Activated CD4-positive, alpha-beta memory T cell treated with anti-CD3 and anti-CD28 coated beads, Interleukin-2, amount 10 ng/mL, durations not matched to agents 7 days and 5 days (primary cell): ENCODE measurements at regions of chr17 and their contacts with region 1.

Region 1: GRCh38 chr17:31524926-31525800 is 133.7 kb downstream of the RAB11FIP4 start:
- DNase-seq: peak; percentile 85
- H3K4me3 Mint-ChIP-seq: no peak overlapping the region
- H3K27ac Mint-ChIP-seq: no peak overlapping the region
- H3K4me1 Mint-ChIP-seq: no peaks in the 10 kb centered on the region
- H3K27me3 Mint-ChIP-seq: no peaks in the 10 kb centered on the region

Region 2: DNA sequence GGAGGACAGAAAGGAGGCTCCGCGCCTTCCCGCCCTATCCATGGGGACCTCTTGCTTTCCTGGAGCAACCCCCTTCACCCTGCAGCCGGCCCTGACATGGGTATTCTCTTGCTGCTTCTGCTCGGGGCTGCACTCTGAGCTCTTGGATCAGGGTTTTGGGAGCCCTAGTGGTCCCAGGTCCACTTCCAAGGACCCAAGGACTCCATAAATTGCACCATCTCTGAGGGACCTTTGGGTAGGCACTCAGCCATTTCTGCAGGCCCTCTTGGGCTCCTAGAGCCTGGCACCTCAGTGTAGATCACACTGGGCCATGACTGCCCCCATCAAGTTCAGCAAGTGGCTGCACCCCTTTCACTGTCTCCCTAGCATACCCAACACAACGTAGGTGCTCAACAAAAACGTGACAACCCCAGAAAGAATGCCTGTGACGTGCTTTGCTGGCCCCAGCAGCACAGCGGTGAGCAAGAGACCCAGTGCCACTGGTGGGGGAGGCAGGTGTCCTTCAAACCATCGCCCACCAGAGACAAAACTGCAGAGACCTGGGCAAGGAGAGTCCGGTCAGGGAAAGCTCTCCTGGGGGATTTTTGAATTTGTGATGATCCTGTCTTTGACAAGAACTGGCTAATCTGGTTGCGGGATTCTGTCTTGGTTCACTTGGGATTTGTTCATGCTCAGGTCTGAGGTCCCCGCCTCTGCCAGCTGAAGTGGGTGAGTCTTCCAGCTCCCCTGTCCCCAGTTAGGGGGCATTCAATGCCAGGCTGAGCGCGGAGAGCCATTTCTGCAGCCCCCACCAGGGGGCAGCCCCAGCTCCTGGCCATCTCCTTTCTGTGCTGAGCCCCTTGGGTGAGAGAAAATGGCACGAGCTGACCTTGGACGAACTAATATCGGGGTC is 136.1 kb before region 1 on chr17:
- CTCF ChIA-PET with region 1: interaction called, 25 read pairs
- POLR2A ChIA-PET with region 1: interaction called, 4 read pairs
- DNase-seq: peak; percentile 46
- H3K4me3 Mint-ChIP-seq: no peak overlapping the region
- H3K27ac Mint-ChIP-seq: no peak overlapping the region
- H3K4me1 Mint-ChIP-seq: peaks cover 13% of the 10 kb centered on the region
- H3K27me3 Mint-ChIP-seq: peaks cover 41% of the 10 kb centered on the region

Region 3: GRCh38 chr17:31437720-31438420 is 87.3 kb before region 1 on chr17:
- CTCF ChIA-PET with region 1: interaction called, 26 read pairs
- POLR2A ChIA-PET with region 1: no interaction called
- DNase-seq: no peak
- H3K4me3 Mint-ChIP-seq: no peak overlapping the region
- H3K27ac Mint-ChIP-seq: no peak overlapping the region
- H3K4me1 Mint-ChIP-seq: peaks cover 17% of the 10 kb centered on the region
- H3K27me3 Mint-ChIP-seq: peaks cover 20% of the 10 kb centered on the region

Region 4: GRCh38 chr17:31549525-31550388 is 24.6 kb after region 1 on chr17:
- CTCF ChIA-PET with region 1: no interaction called
- POLR2A ChIA-PET with region 1: no interaction called
- DNase-seq: peak; percentile 93
- H3K4me3 Mint-ChIP-seq: peak overlapping the region; percentile 70
- H3K27ac Mint-ChIP-seq: peak overlapping the region; percentile 77
- H3K4me1 Mint-ChIP-seq: peaks cover 26% of the 10 kb centered on the region
- H3K27me3 Mint-ChIP-seq: peaks cover 17% of the 10 kb centered on the region

Region 5: DNA sequence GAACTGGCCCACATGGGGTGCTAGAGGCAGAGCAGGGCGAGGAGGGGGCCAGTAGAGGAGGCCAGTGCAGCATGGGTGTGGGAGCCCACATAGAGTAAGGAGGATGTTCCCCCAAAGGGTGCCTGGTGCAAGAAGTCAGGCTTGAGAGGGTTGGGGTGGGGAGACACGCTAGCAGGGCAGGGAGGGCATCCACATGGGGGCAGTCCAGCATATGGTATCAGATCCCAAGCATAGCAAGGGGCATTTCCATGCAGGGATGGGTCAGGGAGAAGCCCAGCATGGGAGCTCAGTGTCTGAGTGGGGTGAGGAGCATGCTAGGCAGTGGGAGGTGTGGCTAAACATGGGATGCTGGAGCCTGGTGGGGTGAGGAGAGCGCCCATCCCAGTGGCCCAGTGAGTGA is 120.2 kb after region 1 on chr17:
- CTCF ChIA-PET with region 1: no interaction called
- POLR2A ChIA-PET with region 1: no interaction called
- DNase-seq: no peak
- H3K4me3 Mint-ChIP-seq: no peak overlapping the region
- H3K27ac Mint-ChIP-seq: no peak overlapping the region
- H3K4me1 Mint-ChIP-seq: no peaks in the 10 kb centered on the region
- H3K27me3 Mint-ChIP-seq: no peaks in the 10 kb centered on the region

Region 6: GRCh38 chr17:31674717-31675349 is 149.7 kb after region 1 on chr17:
- CTCF ChIA-PET with region 1: no interaction called
- POLR2A ChIA-PET with region 1: no interaction called
- DNase-seq: no peak
- H3K4me3 Mint-ChIP-seq: no peak overlapping the region
- H3K27ac Mint-ChIP-seq: no peak overlapping the region
- H3K4me1 Mint-ChIP-seq: peaks cover 2% of the 10 kb centered on the region
- H3K27me3 Mint-ChIP-seq: peaks cover 21% of the 10 kb centered on the region